ENCODE measurements at regions of chr2 and their contacts with region 1.

Region 1: GRCh38 chr2:214481204-214481603 is 70.3 kb downstream of the VWC2L start:
- DNase-seq: no peak
- ATAC-seq: no peak
- H3K4me3 ChIP-seq: no peak overlapping the region
- H3K27ac ChIP-seq: no peak overlapping the region
- H3K4me1 ChIP-seq: no peaks in the 10 kb centered on the region
- H3K27me3 ChIP-seq: no peaks in the 10 kb centered on the region
- CTCF ChIP-seq: no peak
- EP300 ChIP-seq: no peak
- POLR2A ChIP-seq: no peak
- RAD21 ChIP-seq: no peak

Region 2: DNA sequence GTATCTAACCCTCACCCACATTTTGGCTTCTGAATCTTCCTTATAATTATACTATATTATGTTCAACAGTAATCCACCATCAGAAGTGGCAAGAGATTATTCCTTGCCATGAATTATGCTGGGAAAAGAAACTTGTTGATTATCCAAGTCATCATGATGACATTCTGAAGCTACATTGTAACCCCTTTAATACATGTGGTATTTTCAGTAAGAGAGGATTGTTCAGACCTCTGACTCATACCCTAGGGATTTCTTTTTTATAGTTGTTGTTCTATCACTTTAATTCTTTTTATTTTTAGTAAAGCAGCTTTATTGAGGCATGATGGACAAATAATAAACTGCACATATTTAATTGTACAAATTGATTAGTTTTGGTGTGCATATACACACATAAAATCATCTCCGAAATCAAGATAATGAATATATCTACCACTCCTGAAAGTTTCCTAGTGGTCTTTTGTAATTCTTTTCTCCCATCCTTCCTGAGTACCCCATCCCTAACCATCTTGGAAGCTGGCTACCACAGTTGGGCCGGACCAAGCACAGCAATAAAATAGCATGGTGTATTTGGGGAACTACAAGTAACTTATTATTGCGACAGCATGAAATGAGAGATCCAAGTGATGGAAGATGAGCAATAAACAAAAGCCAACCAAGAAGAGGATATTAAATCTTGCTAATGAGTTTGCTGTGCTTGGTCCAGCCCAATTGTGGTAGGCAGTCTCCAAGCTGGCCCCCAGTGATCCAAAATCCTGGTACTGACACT is 168.4 kb after region 1 on chr2:
- CTCF ChIA-PET with region 1: no interaction called
- POLR2A ChIA-PET with region 1: no interaction called
- in situ Hi-C with region 1: no loop called
- intact Hi-C with region 1: no loop called
- DNase-seq: no peak
- ATAC-seq: no peak
- H3K4me3 ChIP-seq: no peak overlapping the region
- H3K27ac ChIP-seq: no peak overlapping the region
- H3K4me1 ChIP-seq: no peaks in the 10 kb centered on the region
- H3K27me3 ChIP-seq: no peaks in the 10 kb centered on the region
- CTCF ChIP-seq: no peak
- EP300 ChIP-seq: no peak
- POLR2A ChIP-seq: no peak
- RAD21 ChIP-seq: no peak

Region 3: GRCh38 chr2:215105608-215106354 is 624.6 kb after region 1 on chr2:
- CTCF ChIA-PET with region 1: no interaction called
- POLR2A ChIA-PET with region 1: no interaction called
- in situ Hi-C with region 1: no loop called
- intact Hi-C with region 1: no loop called
- DNase-seq: no peak
- ATAC-seq: no peak
- H3K4me3 ChIP-seq: no peak overlapping the region
- H3K27ac ChIP-seq: no peak overlapping the region
- H3K4me1 ChIP-seq: no peaks in the 10 kb centered on the region
- H3K27me3 ChIP-seq: no peaks in the 10 kb centered on the region; a peak in 1 of 5 replicates
- CTCF ChIP-seq: no peak
- EP300 ChIP-seq: no peak
- POLR2A ChIP-seq: no peak
- RAD21 ChIP-seq: no peak

Region 4: DNA sequence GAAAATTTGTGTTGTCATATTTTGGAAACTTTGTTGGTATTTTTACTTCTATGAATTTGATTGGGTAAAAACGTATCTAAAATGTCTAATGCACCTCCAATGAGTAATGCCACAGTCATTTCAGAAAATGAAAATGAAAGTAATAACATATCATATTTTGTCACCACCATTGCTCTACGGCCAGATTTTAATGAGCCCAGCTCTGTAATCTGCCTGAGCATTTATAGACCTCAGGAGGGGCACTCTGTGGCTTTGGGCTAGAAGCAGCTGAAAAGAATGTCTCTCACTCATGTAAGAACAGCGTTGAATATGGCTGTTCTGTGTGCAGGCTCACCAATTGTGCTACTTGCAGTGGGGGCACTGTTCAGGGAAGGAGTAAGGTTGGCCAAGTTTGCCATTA is 689.9 kb after region 1 on chr2:
- CTCF ChIA-PET with region 1: no interaction called
- POLR2A ChIA-PET with region 1: no interaction called
- in situ Hi-C with region 1: no loop called
- intact Hi-C with region 1: no loop called
- DNase-seq: no peak
- ATAC-seq: no peak
- H3K4me3 ChIP-seq: no peak overlapping the region
- H3K27ac ChIP-seq: no peak overlapping the region
- H3K4me1 ChIP-seq: no peaks in the 10 kb centered on the region
- H3K27me3 ChIP-seq: no peaks in the 10 kb centered on the region
- CTCF ChIP-seq: no peak
- EP300 ChIP-seq: no peak
- POLR2A ChIP-seq: no peak
- RAD21 ChIP-seq: no peak

Region 5: DNA sequence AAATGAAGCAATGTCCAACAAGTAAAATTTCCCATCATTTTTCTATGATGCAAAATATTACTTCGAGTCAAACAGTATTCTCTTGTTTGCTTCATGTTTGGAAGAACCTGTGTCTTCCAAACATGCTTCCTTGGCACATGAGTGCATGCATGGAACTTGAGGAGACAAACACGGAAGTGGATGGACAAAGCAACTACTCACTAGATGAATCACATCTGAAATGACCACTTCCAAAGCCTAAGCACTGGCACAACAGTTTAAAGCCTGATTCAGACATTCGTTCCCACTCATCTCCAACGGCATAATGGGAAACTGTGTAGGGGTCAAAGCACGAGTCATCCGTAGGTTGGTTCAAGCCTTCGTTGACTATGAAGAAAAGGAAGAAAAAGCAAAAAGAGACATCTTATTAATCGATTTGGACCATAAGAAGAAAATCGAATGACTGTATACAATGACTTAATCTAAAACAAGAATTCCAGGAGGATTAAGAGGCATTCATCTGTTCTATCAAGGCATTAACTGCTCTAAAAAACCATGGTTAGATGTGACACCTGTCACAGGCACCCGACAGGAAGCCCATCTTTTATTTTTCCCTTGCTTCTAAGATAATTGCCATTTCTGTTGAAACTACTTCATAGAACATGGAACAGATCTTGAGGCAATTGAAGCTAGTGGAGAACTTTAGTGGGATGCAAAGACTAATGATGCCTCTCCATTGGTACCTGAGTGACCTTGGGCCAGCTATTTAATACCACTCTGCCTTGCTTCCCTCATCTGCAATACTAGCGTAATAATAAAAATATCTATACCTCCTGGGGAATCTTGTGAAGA is 886.7 kb after region 1 on chr2:
- CTCF ChIA-PET with region 1: no interaction called
- POLR2A ChIA-PET with region 1: no interaction called
- in situ Hi-C with region 1: loop called (anchors 10 kb)
- intact Hi-C with region 1: no loop called
- DNase-seq: no peak
- ATAC-seq: no peak
- H3K4me3 ChIP-seq: no peak overlapping the region
- H3K27ac ChIP-seq: no peak overlapping the region
- H3K4me1 ChIP-seq: no peaks in the 10 kb centered on the region; a peak in 1 of 5 replicates
- H3K27me3 ChIP-seq: no peaks in the 10 kb centered on the region
- CTCF ChIP-seq: no peak
- EP300 ChIP-seq: no peak
- POLR2A ChIP-seq: no peak
- RAD21 ChIP-seq: no peak